Activated B cell treated with CpG ODN at 0.5 μM for 24 hours (primary cell): ENCODE measurements at regions of chr4 and their contacts with region 1.

Region 1: DNA sequence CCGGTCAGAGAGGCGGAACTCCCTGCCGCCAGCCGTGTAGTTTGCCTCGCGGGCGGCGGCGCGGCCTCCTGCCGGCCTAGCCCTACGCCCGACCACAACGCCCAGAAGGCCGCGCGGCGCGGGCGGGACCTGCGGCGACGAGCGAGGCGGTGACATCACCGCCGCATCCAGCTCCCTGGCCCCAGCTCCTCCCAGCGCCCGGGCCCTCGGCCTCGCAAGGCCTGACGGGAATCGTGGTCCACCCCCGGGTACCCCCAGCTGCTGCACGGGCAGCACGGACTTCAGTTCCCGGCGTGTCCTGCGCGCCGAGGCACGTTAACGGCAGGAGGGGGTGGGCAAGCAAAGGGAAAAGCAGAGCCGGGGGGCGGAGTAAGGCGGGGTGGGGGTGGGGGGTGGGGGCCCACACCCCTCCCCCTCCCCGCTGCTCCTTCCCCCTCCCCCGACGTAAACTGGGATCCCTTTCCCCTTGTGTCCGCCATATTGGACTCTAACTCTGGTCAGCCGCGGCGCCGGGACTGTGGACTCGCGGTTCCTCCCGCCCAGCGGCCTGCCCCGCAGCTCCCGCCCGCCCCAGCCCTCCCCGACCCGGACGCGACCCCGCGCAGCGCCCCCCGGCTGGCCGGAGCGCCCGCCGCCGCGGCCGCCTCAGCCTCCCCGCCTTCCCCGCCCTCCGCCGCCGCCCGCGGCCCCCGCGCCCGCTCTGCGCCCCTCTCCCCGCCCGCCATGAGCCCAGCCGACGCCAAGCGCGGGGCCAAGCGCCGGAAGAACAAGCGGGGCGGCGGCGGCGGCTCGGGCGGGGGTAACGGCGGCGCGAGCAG is at the start of gene FAM193A:
- DNase-seq: peak; percentile 94
- ATAC-seq: peak; percentile 92
- H3K4me3 Mint-ChIP-seq: peak within 1 kb of the TSS; percentile 92
- H3K27ac Mint-ChIP-seq: peak within 1 kb of the TSS; percentile 90
- H3K4me1 Mint-ChIP-seq: peaks cover 23% of the 10 kb centered on the region
- H3K27me3 Mint-ChIP-seq: no peaks in the 10 kb centered on the region
- CTCF ChIP-seq: no peak
- total RNA-seq, gene FAM193A: 40.0 and 42.8 TPM in 2 replicates

Region 2: DNA sequence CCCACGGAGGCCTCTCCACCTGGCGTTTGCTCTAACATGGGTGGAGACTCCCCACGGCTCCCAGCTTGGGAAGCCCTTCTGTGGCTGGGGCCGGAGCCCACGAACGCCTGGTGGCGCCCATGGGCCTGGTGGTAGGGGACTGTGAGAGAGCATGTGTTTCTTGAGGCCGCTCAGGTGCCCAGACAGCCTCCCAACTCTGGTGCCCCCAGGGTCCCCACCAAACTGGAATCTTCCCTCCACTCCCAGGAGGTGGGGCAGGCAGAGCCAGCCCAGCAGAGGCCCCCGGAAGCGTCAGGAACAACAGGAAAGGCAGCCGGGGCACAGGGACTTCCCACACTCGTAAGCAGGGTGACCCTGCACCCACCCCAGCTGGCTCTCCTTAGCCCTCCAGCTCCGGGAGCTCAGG is 776.6 kb before region 1 on chr4:
- CTCF ChIA-PET with region 1: no interaction called
- POLR2A ChIA-PET with region 1: no interaction called
- intact Hi-C with region 1: no loop called
- DNase-seq: no peak
- ATAC-seq: no peak
- H3K4me3 Mint-ChIP-seq: no peak overlapping the region
- H3K27ac Mint-ChIP-seq: no peak overlapping the region
- H3K4me1 Mint-ChIP-seq: peaks cover 3% of the 10 kb centered on the region
- H3K27me3 Mint-ChIP-seq: peaks cover 9% of the 10 kb centered on the region
- CTCF ChIP-seq: no peak

Region 3: GRCh38 chr4:1981251-1982058 is 554.9 kb before region 1 on chr4:
- CTCF ChIA-PET with region 1: no interaction called
- POLR2A ChIA-PET with region 1: no interaction called
- intact Hi-C with region 1: no loop called
- DNase-seq: no peak
- ATAC-seq: no peak
- H3K4me3 Mint-ChIP-seq: no peak overlapping the region
- H3K27ac Mint-ChIP-seq: no peak overlapping the region
- H3K4me1 Mint-ChIP-seq: no peaks in the 10 kb centered on the region
- H3K27me3 Mint-ChIP-seq: no peaks in the 10 kb centered on the region
- CTCF ChIP-seq: no peak

Region 4: GRCh38 chr4:2220016-2220630 is 316.3 kb before region 1 on chr4:
- CTCF ChIA-PET with region 1: no interaction called
- POLR2A ChIA-PET with region 1: no interaction called
- intact Hi-C with region 1: loop called (anchors 5 kb)
- DNase-seq: peak; percentile 62
- ATAC-seq: peak; percentile 97
- H3K4me3 Mint-ChIP-seq: no peak overlapping the region
- H3K27ac Mint-ChIP-seq: no peak overlapping the region
- H3K4me1 Mint-ChIP-seq: peaks cover 4% of the 10 kb centered on the region
- H3K27me3 Mint-ChIP-seq: no peaks in the 10 kb centered on the region
- CTCF ChIP-seq: peak; percentile 94

Region 5: DNA sequence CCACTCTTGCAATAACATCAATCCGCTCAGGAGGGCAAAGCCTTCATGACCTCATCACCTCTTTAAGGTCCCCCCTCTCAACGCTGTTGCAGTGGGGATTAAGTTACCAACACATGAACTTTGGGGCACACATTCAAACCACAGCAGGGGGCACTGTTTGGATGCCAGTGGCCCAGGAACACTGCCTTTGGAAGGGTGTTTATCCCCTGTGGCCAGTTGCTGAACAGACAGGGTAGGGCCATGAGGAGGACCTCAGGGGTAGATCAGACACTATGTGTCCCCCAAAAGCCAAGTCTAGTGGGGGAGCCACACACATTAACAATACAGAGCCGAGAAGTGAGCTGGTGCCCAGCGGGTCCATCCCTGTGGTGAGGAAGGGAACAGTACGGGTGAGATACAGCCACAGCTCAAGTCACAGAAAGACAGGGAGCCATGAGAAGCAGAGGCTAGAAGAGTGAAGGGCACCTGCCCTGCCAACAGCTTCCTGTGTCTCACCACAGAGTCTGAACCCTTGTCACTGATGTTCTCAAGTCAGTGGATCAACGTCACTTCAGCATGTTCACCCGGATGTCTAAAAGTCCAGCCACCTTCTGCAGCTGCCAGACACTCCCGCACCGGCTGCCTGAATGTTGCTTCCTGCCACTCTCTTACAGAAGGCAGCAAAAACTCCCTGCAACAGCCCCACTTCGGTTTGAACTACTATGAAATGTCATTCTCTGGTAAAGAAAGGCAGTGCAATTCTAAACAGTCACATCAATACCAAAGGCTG is 254.6 kb before region 1 on chr4:
- CTCF ChIA-PET with region 1: no interaction called
- POLR2A ChIA-PET with region 1: interaction called, 3 read pairs
- intact Hi-C with region 1: loop called (anchors 1 kb)
- DNase-seq: peak; percentile 57
- ATAC-seq: peak; percentile 93
- H3K4me3 Mint-ChIP-seq: peak overlapping the region; percentile 70
- H3K27ac Mint-ChIP-seq: peak overlapping the region; percentile 97
- H3K4me1 Mint-ChIP-seq: peaks cover 35% of the 10 kb centered on the region
- H3K27me3 Mint-ChIP-seq: no peaks in the 10 kb centered on the region
- CTCF ChIP-seq: no peak

Region 6: GRCh38 chr4:2468445-2469192 is 67.8 kb before region 1 on chr4 and contains the start of gene RNF4:
- CTCF ChIA-PET with region 1: no interaction called
- POLR2A ChIA-PET with region 1: interaction called, 54 read pairs
- intact Hi-C with region 1: loop called (anchors 1 kb)
- DNase-seq: peak; percentile 83
- ATAC-seq: peak; percentile 87
- H3K4me3 Mint-ChIP-seq: peak within 1 kb of the TSS; percentile 96
- H3K27ac Mint-ChIP-seq: peak within 1 kb of the TSS; percentile 94
- H3K4me1 Mint-ChIP-seq: peaks cover 51% of the 10 kb centered on the region
- H3K27me3 Mint-ChIP-seq: no peaks in the 10 kb centered on the region
- CTCF ChIP-seq: no peak
- total RNA-seq, gene RNF4: 93.5 and 93.6 TPM in 2 replicates

Region 7: GRCh38 chr4:2689825-2690700 is 153.7 kb after region 1 on chr4:
- CTCF ChIA-PET with region 1: no interaction called
- POLR2A ChIA-PET with region 1: no interaction called
- intact Hi-C with region 1: loop called (anchors 1 kb)
- DNase-seq: peak; percentile 78
- ATAC-seq: peak; percentile 85
- H3K4me3 Mint-ChIP-seq: peak overlapping the region; percentile 75
- H3K27ac Mint-ChIP-seq: peak overlapping the region; percentile 95
- H3K4me1 Mint-ChIP-seq: peaks cover 70% of the 10 kb centered on the region
- H3K27me3 Mint-ChIP-seq: no peaks in the 10 kb centered on the region
- CTCF ChIP-seq: no peak

Region 8: GRCh38 chr4:2843263-2843940 is 307.0 kb after region 1 on chr4 and contains the start of gene ADD1:
- CTCF ChIA-PET with region 1: no interaction called
- POLR2A ChIA-PET with region 1: no interaction called
- intact Hi-C with region 1: no loop called
- DNase-seq: peak; percentile 100
- ATAC-seq: peak; percentile 87
- H3K4me3 Mint-ChIP-seq: peak within 1 kb of the TSS; percentile 96
- H3K27ac Mint-ChIP-seq: peak within 1 kb of the TSS; percentile 94
- H3K4me1 Mint-ChIP-seq: peaks cover 61% of the 10 kb centered on the region
- H3K27me3 Mint-ChIP-seq: no peaks in the 10 kb centered on the region
- CTCF ChIP-seq: no peak
- total RNA-seq, gene ADD1: 326 and 340 TPM in 2 replicates

Region 9: DNA sequence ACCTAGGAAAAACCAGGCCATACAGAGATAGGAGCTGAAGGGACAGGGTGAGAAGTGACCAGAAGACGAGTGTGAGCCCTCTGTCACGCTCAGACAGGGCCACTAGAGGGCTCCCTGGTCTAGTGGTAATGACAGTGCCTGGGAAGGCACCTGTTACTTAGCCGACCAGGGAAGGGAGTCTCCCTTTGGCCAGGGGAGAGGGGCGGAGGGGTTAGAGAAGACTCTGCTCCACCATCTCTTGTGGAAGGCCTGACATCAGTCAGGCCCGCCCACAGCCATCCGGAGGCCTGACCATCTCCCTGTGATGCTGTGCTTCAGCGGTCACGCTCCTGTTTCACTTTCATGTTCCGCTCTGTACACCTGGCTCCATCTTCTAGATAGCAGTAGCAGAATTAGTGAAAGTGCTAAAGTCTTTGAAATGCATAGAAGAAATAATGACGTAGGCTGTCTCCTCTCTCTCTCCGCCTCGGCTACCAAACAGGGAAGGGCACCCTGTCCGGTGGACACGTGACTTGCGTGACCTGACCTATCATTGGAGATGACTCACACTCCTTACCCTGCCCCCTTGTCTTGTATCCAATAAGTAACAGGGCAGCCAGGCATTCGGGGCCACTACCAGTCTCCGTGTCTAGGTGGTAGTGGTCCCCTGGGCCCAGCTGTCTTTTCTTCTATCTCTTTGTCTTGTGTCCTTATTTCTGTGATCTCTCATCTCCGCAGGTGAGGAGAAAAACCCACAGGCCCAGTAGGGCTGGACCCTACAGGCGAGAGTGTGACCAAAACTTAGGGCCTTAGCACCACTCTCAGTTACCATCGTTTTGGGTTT is 511.3 kb after region 1 on chr4:
- CTCF ChIA-PET with region 1: no interaction called
- POLR2A ChIA-PET with region 1: no interaction called
- intact Hi-C with region 1: loop called (anchors 10 kb)
- DNase-seq: peak; percentile 75
- ATAC-seq: peak; percentile 92
- H3K4me3 Mint-ChIP-seq: peak overlapping the region; percentile 47
- H3K27ac Mint-ChIP-seq: peak overlapping the region; percentile 95
- H3K4me1 Mint-ChIP-seq: peaks cover 52% of the 10 kb centered on the region
- H3K27me3 Mint-ChIP-seq: no peaks in the 10 kb centered on the region
- CTCF ChIP-seq: no peak